ENCODE measurements at regions of chr17 and their contacts with region 1.

Region 1: DNA sequence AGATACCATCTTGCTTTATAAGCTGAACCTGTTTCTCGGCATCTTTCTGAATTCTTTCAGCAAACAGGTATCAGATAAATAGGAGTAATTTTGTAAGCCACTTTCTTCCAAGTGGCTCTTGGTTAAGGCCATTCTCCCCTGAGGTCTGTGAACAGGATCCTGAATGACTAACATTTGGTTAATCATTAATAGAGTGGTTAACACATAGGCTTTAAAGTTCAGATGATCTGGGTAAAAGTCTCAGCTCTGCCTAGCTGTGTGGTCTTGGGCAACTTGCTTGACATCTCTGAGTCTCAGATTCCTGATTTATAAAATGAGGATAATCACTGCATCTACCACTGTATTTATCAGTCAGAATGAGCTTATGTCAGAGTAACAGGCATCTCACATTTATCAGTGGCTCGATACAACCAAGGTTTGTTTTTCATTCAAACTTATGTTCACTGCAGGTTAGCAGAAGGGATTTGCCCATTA is 44.4 kb upstream of the ANKFN1 start:
- DNase-seq: no peak
- ATAC-seq: no peak
- H3K4me3 Mint-ChIP-seq: no peak overlapping the region
- H3K27ac Mint-ChIP-seq: no peak overlapping the region
- H3K4me1 Mint-ChIP-seq: no peaks in the 10 kb centered on the region
- H3K27me3 Mint-ChIP-seq: peaks cover 3% of the 10 kb centered on the region

Region 2: GRCh38 chr17:56047331-56047730 is 61.5 kb before region 1 on chr17:
- CTCF ChIA-PET with region 1: no interaction called
- POLR2A ChIA-PET with region 1: no interaction called
- intact Hi-C with region 1: no loop called
- DNase-seq: no peak
- ATAC-seq: no peak
- H3K4me3 Mint-ChIP-seq: no peak overlapping the region
- H3K27ac Mint-ChIP-seq: no peak overlapping the region
- H3K4me1 Mint-ChIP-seq: no peaks in the 10 kb centered on the region
- H3K27me3 Mint-ChIP-seq: peaks cover 16% of the 10 kb centered on the region

Region 3: DNA sequence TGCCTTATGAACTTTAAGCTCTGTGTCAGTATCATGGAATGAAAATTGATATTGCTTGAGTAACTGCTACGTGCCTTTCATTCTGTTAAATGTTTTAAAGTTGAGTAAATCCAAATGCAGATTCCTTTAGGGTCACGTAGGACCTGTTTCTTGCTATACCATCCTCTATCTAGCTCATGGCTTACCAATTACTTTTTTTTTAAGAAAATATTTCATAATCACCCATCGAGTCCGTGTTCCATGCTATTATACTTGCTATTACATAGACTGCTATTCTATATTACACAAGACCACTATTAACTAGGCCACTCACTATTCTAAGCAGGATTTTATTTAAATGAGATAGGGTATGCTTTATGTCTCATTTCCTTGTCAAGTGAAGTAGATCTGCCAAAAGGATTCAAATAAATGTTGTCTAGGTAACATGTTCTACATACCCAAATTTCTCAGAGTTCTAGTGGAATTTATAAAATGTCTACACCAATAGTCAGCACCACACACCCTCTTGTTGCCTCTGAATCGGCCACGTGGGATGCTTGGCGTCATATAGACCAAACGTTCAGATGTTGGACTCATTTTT is 56.3 kb after region 1 on chr17:
- CTCF ChIA-PET with region 1: no interaction called
- POLR2A ChIA-PET with region 1: no interaction called
- intact Hi-C with region 1: loop called in 1 of 2 experiments (anchors 10 kb)
- DNase-seq: no peak
- ATAC-seq: no peak
- H3K4me3 Mint-ChIP-seq: no peak overlapping the region
- H3K27ac Mint-ChIP-seq: no peak overlapping the region
- H3K4me1 Mint-ChIP-seq: no peaks in the 10 kb centered on the region
- H3K27me3 Mint-ChIP-seq: peaks cover 6% of the 10 kb centered on the region

Region 4: DNA sequence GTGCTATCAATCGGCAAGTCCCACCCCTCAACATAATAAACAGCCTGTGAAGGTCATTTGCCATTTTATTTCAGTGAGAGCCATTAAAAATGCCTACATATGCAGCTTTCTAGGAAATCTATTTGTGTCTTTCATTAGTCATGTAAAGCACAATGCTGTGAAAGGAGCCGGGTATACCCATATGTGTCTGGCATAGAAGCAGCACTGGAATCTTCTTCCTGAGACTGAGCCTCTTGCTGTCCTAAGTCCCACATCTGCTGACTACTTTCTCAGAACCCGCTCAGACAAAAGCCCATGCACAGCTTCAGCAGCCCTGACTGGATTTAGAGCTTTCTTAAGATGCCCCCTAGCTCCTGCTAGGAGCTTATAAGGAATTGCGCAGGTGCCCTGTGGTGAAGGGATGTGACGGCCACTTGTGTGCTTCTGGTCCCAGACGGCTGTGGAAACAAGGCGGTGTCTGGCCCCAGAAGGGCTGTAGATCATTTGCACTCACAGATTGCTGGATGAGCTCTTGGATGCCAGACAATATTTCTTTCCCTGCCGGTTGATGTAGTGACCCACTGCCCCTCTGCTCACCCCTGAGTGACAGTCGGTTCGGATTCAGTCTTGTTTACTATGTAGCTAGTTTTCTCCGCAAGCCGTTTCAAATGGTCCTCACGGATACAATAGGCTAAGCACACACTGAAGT is 216.6 kb after region 1 on chr17:
- CTCF ChIA-PET with region 1: no interaction called
- POLR2A ChIA-PET with region 1: no interaction called
- intact Hi-C with region 1: no loop called
- DNase-seq: no peak
- ATAC-seq: no peak
- H3K4me3 Mint-ChIP-seq: no peak overlapping the region
- H3K27ac Mint-ChIP-seq: no peak overlapping the region
- H3K4me1 Mint-ChIP-seq: no peaks in the 10 kb centered on the region
- H3K27me3 Mint-ChIP-seq: peaks cover 4% of the 10 kb centered on the region